HCT116 (cell line): ENCODE measurements at regions of chr17 and their contacts with region 1.

Region 1: GRCh38 chr17:75861927-75862317 is 6.8 kb upstream of the WBP2 start:
- DNase-seq: no peak
- ATAC-seq: no peak
- H3K4me3 ChIP-seq: no peak overlapping the region
- H3K27ac ChIP-seq: no peak overlapping the region; the same call in 1 of the 2 replicates
- H3K4me1 ChIP-seq: peaks cover 20 to 36% of the 10 kb centered on the region in 2 experiments; a peak in 3 of 4 replicates
- H3K27me3 ChIP-seq: no peaks in the 10 kb centered on the region
- CTCF ChIP-seq: no peak
- POLR2A ChIP-seq: no peak
- RAD21 ChIP-seq: no peak

Region 2: DNA sequence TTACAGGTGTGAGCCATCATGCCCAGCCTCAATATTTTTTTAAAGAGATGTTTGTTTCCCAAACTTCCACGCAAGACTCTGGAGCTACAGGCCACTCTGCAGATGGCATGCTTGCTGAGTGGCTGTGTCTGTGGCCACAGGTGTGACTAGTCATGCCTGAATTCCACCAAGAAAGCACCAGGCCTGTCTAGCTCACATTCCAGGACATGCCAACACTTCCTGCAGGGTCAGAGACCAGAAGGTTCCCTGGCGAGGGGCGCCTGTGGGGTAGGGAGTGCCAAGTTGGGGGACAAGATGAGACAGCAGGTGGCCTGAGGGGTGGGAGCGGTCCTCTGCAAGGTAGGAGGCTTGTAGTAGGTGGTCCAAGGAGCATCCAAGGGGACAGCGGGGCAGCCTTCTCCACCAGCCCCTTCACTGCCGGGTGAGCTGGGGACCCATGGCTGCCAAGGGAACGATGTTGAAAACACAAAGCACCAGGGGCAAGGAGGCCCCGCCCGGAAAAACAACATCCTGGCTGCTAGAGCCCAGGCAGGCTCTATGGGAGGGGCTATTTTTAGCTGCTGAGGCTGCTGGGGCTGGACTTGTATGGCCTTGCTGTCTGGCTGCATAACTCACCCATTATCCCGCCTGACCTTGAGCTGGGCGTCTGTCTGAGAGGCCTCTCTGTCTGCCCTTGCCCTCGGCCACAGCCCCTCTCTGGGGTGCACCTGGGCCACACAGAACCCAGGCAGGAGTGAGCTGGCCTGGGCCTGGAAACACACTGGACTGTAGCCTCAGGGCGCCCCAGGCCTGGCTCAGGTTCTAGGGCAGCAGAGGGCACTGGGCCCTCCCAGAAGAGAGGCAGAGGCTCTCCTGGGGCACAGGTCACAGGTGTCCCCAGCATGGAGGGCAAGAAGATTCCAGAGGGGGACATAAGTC is 10.8 kb after region 1 on chr17:
- CTCF ChIA-PET with region 1: interaction called, 52 read pairs
- POLR2A ChIA-PET with region 1: interaction called, 7 read pairs
- RAD21 ChIA-PET with region 1: interaction called in 1 of 2 experiments, 5 read pairs
- intact Hi-C with region 1: no loop called
- DNase-seq: no peak
- ATAC-seq: peak; percentile 47
- H3K4me3 ChIP-seq: peak overlapping the region in 1 of 2 experiments; percentile 24; a peak in 2 of 4 replicates
- H3K27ac ChIP-seq: peak overlapping the region; percentile 99
- H3K4me1 ChIP-seq: peaks cover 68 to 84% of the 10 kb centered on the region in 2 experiments
- H3K27me3 ChIP-seq: no peaks in the 10 kb centered on the region
- CTCF ChIP-seq: no peak
- POLR2A ChIP-seq: no peak
- RAD21 ChIP-seq: no peak

Region 3: GRCh38 chr17:76219670-76220383 is 357.9 kb after region 1 on chr17:
- CTCF ChIA-PET with region 1: no interaction called
- POLR2A ChIA-PET with region 1: no interaction called
- RAD21 ChIA-PET with region 1: no interaction called
- intact Hi-C with region 1: no loop called
- DNase-seq: no peak
- ATAC-seq: no peak
- H3K4me3 ChIP-seq: no peak overlapping the region
- H3K27ac ChIP-seq: no peak overlapping the region
- H3K4me1 ChIP-seq: no peaks in the 10 kb centered on the region
- H3K27me3 ChIP-seq: no peaks in the 10 kb centered on the region
- CTCF ChIP-seq: no peak
- POLR2A ChIP-seq: no peak
- RAD21 ChIP-seq: no peak